BJ (cell line): ENCODE measurements at regions of chr21 and their contacts with region 1.

Region 1: GRCh38 chr21:38126669-38127303 is 130.0 kb upstream of the KCNJ15 start:
- DNase-seq: no peak
- H3K4me3 ChIP-seq: no peak overlapping the region
- H3K27me3 ChIP-seq: no peaks in the 10 kb centered on the region; the same call in 1 of the 2 replicates
- CTCF ChIP-seq: peak; percentile 89

Region 2: DNA sequence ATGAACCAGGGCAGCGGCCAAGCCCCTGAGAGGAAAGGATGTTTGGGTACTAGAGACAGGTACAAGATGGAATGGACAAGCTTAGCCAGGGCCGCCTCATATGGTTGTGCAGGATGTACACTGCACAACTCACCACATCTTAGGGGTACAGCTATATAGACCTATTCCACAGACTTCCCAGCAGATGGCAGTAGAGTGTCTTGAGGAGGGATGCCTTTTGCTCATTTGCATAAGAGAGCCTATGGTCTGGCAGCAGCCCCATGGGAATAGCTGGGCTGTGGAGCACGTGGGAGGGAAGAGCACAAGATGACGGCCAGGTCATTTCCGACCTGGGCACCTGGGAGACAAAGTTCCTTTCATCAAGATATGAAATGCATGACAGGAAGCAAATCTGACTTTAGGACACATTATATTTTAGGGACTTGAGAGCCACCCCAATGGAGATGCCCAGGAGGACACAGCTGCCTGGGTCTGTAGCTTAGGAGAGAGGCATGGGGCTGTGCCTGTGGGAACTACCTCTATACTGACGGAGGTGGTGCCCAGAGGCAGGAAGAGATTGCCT is 426.1 kb before region 1 on chr21:
- CTCF ChIA-PET with region 1: interaction called, 16 read pairs
- POLR2A ChIA-PET with region 1: no interaction called
- DNase-seq: no peak
- H3K4me3 ChIP-seq: no peak overlapping the region
- H3K27me3 ChIP-seq: peaks cover 7% of the 10 kb centered on the region
- CTCF ChIP-seq: peak; percentile 82

Region 3: GRCh38 chr21:37758982-37759381 is 367.8 kb before region 1 on chr21:
- CTCF ChIA-PET with region 1: interaction called, 12 read pairs
- POLR2A ChIA-PET with region 1: no interaction called
- DNase-seq: no peak
- H3K4me3 ChIP-seq: no peak overlapping the region
- H3K27me3 ChIP-seq: peaks cover 4% of the 10 kb centered on the region
- CTCF ChIP-seq: peak; percentile 92

Region 4: GRCh38 chr21:38114717-38115333 is 12.0 kb before region 1 on chr21:
- CTCF ChIA-PET with region 1: interaction called, 21 read pairs
- POLR2A ChIA-PET with region 1: no interaction called
- DNase-seq: no peak
- H3K4me3 ChIP-seq: no peak overlapping the region
- H3K27me3 ChIP-seq: no peaks in the 10 kb centered on the region
- CTCF ChIP-seq: no peak

Region 5: GRCh38 chr21:38140210-38140907 is 13.6 kb after region 1 on chr21:
- CTCF ChIA-PET with region 1: interaction called, 38 read pairs
- POLR2A ChIA-PET with region 1: no interaction called
- DNase-seq: no peak
- H3K4me3 ChIP-seq: no peak overlapping the region
- H3K27me3 ChIP-seq: no peaks in the 10 kb centered on the region
- CTCF ChIP-seq: no peak

Region 6: DNA sequence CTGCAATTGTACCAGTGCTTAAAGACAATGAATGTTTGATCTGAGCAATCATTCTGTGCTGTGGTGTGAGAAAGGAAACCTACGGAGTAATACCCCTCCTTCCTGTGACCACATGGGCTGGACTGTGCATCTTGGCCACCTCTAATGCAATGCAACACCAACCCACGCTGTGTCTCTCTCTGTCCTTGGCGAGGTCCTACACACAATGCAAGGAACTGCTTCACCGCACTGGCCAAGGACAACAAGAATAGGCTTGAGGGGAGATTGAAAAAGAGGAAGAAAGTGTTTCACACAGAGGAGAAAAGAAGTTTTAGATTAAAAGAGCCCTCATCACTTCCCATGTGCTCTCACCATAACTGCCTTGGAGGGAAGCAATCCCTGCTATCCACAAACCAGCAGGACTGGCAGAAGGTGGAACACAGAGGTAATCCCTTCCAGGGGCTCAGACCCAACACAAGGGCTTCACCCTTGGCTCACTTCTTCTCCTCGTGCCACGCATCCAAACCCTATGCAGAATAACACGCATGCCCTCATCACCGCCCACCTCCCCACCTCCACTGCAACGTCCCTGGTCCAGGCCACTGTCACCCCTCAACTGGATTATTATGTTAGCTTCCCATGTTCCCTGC is 484.0 kb after region 1 on chr21:
- CTCF ChIA-PET with region 1: no interaction called
- POLR2A ChIA-PET with region 1: no interaction called
- DNase-seq: no peak
- H3K4me3 ChIP-seq: no peak overlapping the region
- H3K27me3 ChIP-seq: 0 out of 2 replicates have a peak, but pooled peaks cover 3% of the 10 kb centered on the region
- CTCF ChIP-seq: no peak

Region 7: DNA sequence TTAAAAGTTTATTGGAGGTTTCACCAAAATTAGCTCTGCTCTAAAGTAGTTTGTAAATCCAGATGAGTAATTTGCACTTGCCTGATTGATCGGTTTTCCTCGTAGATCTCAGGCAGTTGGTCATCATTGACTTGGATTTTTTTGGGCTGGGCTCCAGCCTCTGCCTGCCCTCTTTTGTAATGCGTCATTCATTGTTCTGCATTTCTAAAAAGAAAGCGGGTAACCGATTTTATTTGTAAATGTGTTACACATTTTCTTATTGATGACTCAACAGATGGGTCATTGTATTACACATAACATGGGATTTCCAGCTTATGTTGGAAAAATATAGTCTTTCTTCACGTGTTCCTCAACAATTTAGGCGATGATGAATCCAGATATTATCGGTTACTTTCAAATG is 684.5 kb after region 1 on chr21:
- CTCF ChIA-PET with region 1: no interaction called
- POLR2A ChIA-PET with region 1: no interaction called
- DNase-seq: peak; percentile 80
- H3K4me3 ChIP-seq: no peak overlapping the region
- H3K27me3 ChIP-seq: no peaks in the 10 kb centered on the region
- CTCF ChIP-seq: no peak